ENCODE measurements at regions of chr18 and their contacts with region 1.

Region 1: DNA sequence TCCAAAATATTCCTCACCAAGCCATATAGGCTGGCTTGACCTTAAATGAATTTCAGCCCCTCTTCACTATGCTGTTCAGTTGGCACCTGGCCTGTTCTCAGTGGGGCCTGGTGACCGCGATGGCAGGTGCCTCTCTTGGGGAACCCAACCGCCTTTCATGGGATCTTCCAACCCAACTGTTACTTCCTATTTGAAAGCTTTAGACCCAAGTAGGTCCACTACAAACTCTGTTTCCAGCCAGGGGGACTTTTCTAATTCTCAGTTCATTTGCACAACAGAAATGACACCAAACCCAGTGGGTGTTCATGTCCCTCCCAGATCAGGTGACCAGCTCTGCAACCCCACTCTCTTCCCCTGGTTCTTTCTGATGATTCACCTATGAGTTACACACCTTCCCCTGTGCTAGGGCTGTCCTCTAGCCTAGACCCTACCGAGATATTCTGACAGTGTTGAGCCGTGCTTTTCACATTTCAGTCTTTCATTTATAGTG is 35.6 kb upstream of the NDUFV2 start:
- DNase-seq: no peak
- H3K4me3 ChIP-seq: no peak overlapping the region
- H3K27ac ChIP-seq: no peak overlapping the region
- H3K4me1 ChIP-seq: peaks cover 0 to 4% (median 0%) of the 10 kb centered on the region in 4 donors
- H3K27me3 ChIP-seq: no peaks in the 10 kb centered on the region
- CTCF ChIP-seq: no peak
- EP300 ChIP-seq: no peak
- POLR2A ChIP-seq: no peak

Region 2: GRCh38 chr18:9147440-9148202 is 80.8 kb after region 1 on chr18:
- intact Hi-C with region 1: loop called (anchors 2 kb)
- DNase-seq: no peak
- H3K4me3 ChIP-seq: no peak overlapping the region
- H3K27ac ChIP-seq: peak overlapping the region in 3 of 4 donors; percentile 12 to 54 (median 41)
- H3K4me1 ChIP-seq: peaks cover 63 to 100% (median 100%) of the 10 kb centered on the region in 4 donors
- H3K27me3 ChIP-seq: no peaks in the 10 kb centered on the region
- CTCF ChIP-seq: peak; percentile 80 to 89 (median 85)
- EP300 ChIP-seq: no peak
- POLR2A ChIP-seq: no peak